ENCODE measurements at regions of chr11 and their contacts with region 1.

Region 1: GRCh38 chr11:117843666-117844484 is 19.3 kb upstream of the FXYD2 start:
- DNase-seq: peak; percentile 61 to 91 (median 84)
- ATAC-seq: peak; percentile 97
- H3K4me3 ChIP-seq: no peak overlapping the region
- H3K4me3 Mint-ChIP-seq: no peak overlapping the region
- H3K27ac ChIP-seq: no peak overlapping the region
- H3K27ac Mint-ChIP-seq: no peak overlapping the region
- H3K4me1 ChIP-seq: no peaks in the 10 kb centered on the region
- H3K4me1 Mint-ChIP-seq: peaks cover 4% of the 10 kb centered on the region
- H3K27me3 ChIP-seq: no peaks in the 10 kb centered on the region
- H3K27me3 Mint-ChIP-seq: no peaks in the 10 kb centered on the region
- CTCF ChIP-seq: peak; percentile 98

Region 2: GRCh38 chr11:117271208-117271607 is 572.7 kb before region 1 on chr11:
- CTCF ChIA-PET with region 1: no interaction called
- POLR2A ChIA-PET with region 1: no interaction called
- intact Hi-C with region 1: no loop called
- DNase-seq: no peak
- ATAC-seq: no peak
- H3K4me3 ChIP-seq: no peak overlapping the region
- H3K4me3 Mint-ChIP-seq: no peak overlapping the region
- H3K27ac ChIP-seq: no peak overlapping the region
- H3K27ac Mint-ChIP-seq: no peak overlapping the region
- H3K4me1 ChIP-seq: no peaks in the 10 kb centered on the region
- H3K4me1 Mint-ChIP-seq: peaks cover 12% of the 10 kb centered on the region
- H3K27me3 ChIP-seq: no peaks in the 10 kb centered on the region
- H3K27me3 Mint-ChIP-seq: no peaks in the 10 kb centered on the region
- CTCF ChIP-seq: no peak

Region 3: GRCh38 chr11:117621226-117621625 is 222.6 kb before region 1 on chr11:
- CTCF ChIA-PET with region 1: no interaction called
- POLR2A ChIA-PET with region 1: no interaction called
- intact Hi-C with region 1: no loop called
- DNase-seq: no peak
- ATAC-seq: no peak
- H3K4me3 ChIP-seq: no peak overlapping the region
- H3K4me3 Mint-ChIP-seq: no peak overlapping the region
- H3K27ac ChIP-seq: no peak overlapping the region
- H3K27ac Mint-ChIP-seq: no peak overlapping the region
- H3K4me1 ChIP-seq: no peaks in the 10 kb centered on the region
- H3K4me1 Mint-ChIP-seq: no peaks in the 10 kb centered on the region
- H3K27me3 ChIP-seq: no peaks in the 10 kb centered on the region
- H3K27me3 Mint-ChIP-seq: peaks cover 7% of the 10 kb centered on the region
- CTCF ChIP-seq: no peak

Region 4: GRCh38 chr11:117704395-117705100 is 139.3 kb before region 1 on chr11:
- CTCF ChIA-PET with region 1: no interaction called
- POLR2A ChIA-PET with region 1: no interaction called
- intact Hi-C with region 1: no loop called
- DNase-seq: no peak
- ATAC-seq: no peak
- H3K4me3 ChIP-seq: no peak overlapping the region
- H3K4me3 Mint-ChIP-seq: no peak overlapping the region
- H3K27ac ChIP-seq: no peak overlapping the region
- H3K27ac Mint-ChIP-seq: no peak overlapping the region
- H3K4me1 ChIP-seq: no peaks in the 10 kb centered on the region
- H3K4me1 Mint-ChIP-seq: peaks cover 6% of the 10 kb centered on the region
- H3K27me3 ChIP-seq: no peaks in the 10 kb centered on the region
- H3K27me3 Mint-ChIP-seq: peaks cover 7% of the 10 kb centered on the region
- CTCF ChIP-seq: no peak

Region 5: DNA sequence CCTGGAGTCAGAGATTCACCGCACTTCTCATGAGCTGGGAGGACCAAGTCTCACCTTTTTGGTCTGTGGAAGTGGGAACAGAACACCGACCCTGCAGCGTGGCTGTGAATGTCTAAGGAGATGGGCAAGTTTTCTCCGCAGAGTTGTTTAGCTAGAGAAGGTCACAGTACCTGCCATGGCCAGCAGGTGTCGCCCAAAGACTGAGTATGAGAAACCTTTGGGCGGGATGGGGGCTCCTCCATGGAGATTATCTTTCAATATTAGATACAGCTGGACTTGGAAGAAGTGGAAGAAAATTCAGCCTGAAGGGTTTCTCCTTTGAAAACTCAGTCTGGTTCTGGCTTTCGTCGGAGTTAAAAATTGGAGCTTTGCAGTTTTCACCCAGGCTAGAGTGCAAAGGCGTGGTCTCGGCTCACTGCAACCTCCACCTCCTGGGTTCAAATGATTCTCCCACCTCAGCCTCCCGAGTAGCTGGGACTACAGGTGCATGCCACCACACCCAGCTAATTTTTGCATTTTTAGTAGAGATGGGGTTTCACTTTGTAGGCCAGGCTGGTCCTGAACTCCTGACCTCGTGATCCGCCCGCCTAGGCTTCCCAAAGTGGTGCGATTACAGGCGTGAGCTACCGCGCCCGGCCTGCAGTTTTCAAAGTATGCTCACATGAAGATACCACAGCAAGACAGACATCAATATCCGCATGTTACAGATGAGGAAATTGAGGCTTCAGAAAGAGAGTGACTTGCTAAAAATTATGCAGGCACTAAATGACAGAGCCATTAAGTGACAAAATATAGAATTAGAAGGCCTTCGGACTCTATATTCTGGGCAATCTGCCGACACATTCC is 36.2 kb before region 1 on chr11:
- CTCF ChIA-PET with region 1: interaction called, 16 read pairs
- POLR2A ChIA-PET with region 1: no interaction called
- intact Hi-C with region 1: no loop called
- DNase-seq: peak; percentile 58 to 85 (median 78)
- ATAC-seq: peak; percentile 89
- H3K4me3 ChIP-seq: no peak overlapping the region
- H3K4me3 Mint-ChIP-seq: no peak overlapping the region
- H3K27ac ChIP-seq: no peak overlapping the region
- H3K27ac Mint-ChIP-seq: no peak overlapping the region
- H3K4me1 ChIP-seq: peaks cover 4% of the 10 kb centered on the region
- H3K4me1 Mint-ChIP-seq: peaks cover 7% of the 10 kb centered on the region
- H3K27me3 ChIP-seq: no peaks in the 10 kb centered on the region
- H3K27me3 Mint-ChIP-seq: no peaks in the 10 kb centered on the region
- CTCF ChIP-seq: peak; percentile 94

Region 6: DNA sequence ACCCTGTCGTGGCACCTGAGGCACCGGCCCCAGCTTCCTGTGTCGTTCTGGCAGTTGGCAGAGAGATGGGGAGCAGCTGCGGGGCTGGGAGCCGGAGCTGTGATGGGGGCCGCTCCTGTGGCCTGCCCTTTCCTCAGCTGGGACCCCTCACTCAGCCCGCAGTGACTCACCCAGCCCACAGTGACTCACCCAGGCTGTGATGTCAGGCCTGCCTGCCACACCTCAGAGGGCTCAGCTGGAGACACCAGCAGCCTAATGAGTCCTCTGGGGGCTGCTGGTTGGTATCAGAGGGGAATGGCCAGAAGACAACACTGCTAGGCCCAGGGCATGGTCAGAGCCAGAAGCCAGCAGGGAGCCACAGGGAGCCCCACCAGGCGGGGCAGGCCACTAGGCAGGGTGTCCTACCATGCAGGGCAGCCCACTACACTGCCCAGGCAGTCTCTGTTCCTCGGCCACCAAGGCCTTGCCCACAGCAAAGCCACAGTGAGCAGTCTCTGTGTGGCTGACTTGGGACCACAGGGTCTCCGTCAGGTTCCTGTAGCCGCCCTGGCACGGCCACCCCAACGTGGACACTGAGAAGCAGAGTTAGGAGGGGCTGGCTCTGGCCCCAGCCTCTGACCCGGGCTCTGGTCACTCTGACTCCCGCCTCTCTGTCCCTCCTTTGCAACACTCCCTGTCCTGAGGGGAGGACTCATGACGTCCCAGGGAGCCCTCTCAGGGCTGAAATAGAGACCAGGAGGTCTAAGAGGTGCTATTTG is 15.1 kb before region 1 on chr11:
- CTCF ChIA-PET with region 1: interaction called, 53 read pairs
- POLR2A ChIA-PET with region 1: no interaction called
- intact Hi-C with region 1: loop called in 1 of 2 experiments (anchors 1 kb)
- DNase-seq: peak; percentile 58 to 94 (median 89)
- ATAC-seq: peak; percentile 87
- H3K4me3 ChIP-seq: no peak overlapping the region
- H3K4me3 Mint-ChIP-seq: peak overlapping the region; percentile 53
- H3K27ac ChIP-seq: peak overlapping the region in 1 of 2 experiments; percentile 69
- H3K27ac Mint-ChIP-seq: peak overlapping the region; percentile 91
- H3K4me1 ChIP-seq: peaks cover 52% of the 10 kb centered on the region
- H3K4me1 Mint-ChIP-seq: peaks cover 69% of the 10 kb centered on the region
- H3K27me3 ChIP-seq: no peaks in the 10 kb centered on the region
- H3K27me3 Mint-ChIP-seq: no peaks in the 10 kb centered on the region
- CTCF ChIP-seq: no peak

Region 7: DNA sequence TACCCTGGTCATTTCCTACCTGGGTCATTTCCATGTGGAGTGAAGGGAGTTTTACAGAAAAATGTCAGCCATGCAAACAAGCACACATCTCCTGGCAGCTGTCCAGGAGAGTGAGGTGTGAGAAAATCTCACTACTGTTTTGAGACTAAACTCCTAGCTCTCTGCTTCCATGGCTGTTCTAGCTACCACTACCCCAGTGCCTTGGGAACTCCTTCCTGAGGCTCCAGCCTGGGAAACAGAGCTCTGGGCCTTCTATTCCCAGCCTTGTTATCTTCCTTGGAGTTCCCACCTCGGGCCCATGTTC is 88.1 kb after region 1 on chr11:
- CTCF ChIA-PET with region 1: interaction called, 16 read pairs
- POLR2A ChIA-PET with region 1: interaction called, 5 read pairs
- intact Hi-C with region 1: no loop called
- DNase-seq: peak in 6 of 9 experiments; percentile 32 to 73 (median 56)
- ATAC-seq: no peak
- H3K4me3 ChIP-seq: no peak overlapping the region
- H3K4me3 Mint-ChIP-seq: no peak overlapping the region
- H3K27ac ChIP-seq: peak overlapping the region in 1 of 2 experiments; percentile 65
- H3K27ac Mint-ChIP-seq: peak overlapping the region; percentile 91
- H3K4me1 ChIP-seq: peaks cover 52% of the 10 kb centered on the region
- H3K4me1 Mint-ChIP-seq: peaks cover 56% of the 10 kb centered on the region
- H3K27me3 ChIP-seq: no peaks in the 10 kb centered on the region
- H3K27me3 Mint-ChIP-seq: no peaks in the 10 kb centered on the region
- CTCF ChIP-seq: no peak

Region 8: GRCh38 chr11:118046051-118046963 is 202.4 kb after region 1 on chr11:
- CTCF ChIA-PET with region 1: interaction called, 213 read pairs
- POLR2A ChIA-PET with region 1: interaction called, 3 read pairs
- intact Hi-C with region 1: no loop called
- DNase-seq: peak; percentile 18 to 88 (median 59)
- ATAC-seq: peak; percentile 83
- H3K4me3 ChIP-seq: no peak overlapping the region
- H3K4me3 Mint-ChIP-seq: peak overlapping the region; percentile 38
- H3K27ac ChIP-seq: peak overlapping the region; percentile 40 to 82
- H3K27ac Mint-ChIP-seq: peak overlapping the region; percentile 94
- H3K4me1 ChIP-seq: peaks cover 91% of the 10 kb centered on the region
- H3K4me1 Mint-ChIP-seq: peaks cover 83% of the 10 kb centered on the region
- H3K27me3 ChIP-seq: no peaks in the 10 kb centered on the region
- H3K27me3 Mint-ChIP-seq: no peaks in the 10 kb centered on the region
- CTCF ChIP-seq: no peak

Region 9: GRCh38 chr11:118171269-118172062 is 327.6 kb after region 1 on chr11:
- CTCF ChIA-PET with region 1: no interaction called
- POLR2A ChIA-PET with region 1: no interaction called
- intact Hi-C with region 1: loop called in 1 of 2 experiments (anchors 2 kb)
- DNase-seq: peak; percentile 45 to 83 (median 72)
- ATAC-seq: peak; percentile 96
- H3K4me3 ChIP-seq: no peak overlapping the region
- H3K4me3 Mint-ChIP-seq: no peak overlapping the region
- H3K27ac ChIP-seq: no peak overlapping the region
- H3K27ac Mint-ChIP-seq: no peak overlapping the region
- H3K4me1 ChIP-seq: peaks cover 8% of the 10 kb centered on the region
- H3K4me1 Mint-ChIP-seq: peaks cover 2% of the 10 kb centered on the region
- H3K27me3 ChIP-seq: no peaks in the 10 kb centered on the region
- H3K27me3 Mint-ChIP-seq: peaks cover 3% of the 10 kb centered on the region
- CTCF ChIP-seq: peak; percentile 95